ENCODE measurements at regions of chr9 and their contacts with region 1.

Region 1: DNA sequence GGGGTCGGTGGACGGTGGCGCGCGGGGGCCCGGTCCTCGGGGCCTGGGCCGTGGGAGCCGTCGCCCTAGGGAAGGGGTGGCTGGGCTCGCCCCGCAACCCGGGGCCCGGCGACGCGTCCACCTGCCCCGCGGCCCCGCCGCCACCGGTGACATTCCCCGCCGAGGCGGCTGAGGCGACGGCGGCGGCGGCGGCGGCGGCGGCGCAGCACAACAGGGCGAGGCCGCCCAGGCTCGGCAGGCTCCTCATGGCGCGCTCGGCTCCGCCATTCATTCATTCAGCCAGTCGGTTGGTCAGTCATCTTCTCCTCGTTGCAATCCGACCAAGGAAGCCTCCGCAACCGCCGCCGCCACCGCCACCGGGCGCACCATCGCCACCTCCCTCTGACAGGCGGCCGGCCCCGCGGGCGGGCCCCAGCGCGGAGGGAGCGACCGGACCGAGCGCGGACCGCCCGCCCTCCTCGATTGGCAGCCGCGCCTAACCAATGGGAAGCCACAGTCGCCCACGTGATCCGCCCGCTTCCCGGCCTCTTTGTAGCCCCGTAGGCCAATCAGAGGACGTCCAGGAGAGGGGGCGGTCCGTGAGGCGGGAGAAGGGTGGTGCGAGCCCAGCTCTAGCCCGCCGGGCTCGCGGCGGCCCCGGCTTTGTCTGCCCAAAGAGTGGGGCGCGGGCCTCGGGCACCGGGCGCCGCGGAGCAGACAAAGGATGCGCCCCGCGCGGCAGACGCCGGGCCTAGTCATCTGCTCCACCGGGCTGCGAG is at the start of gene MEGF9:
- DNase-seq: peak; percentile 95
- ATAC-seq: peak; percentile 94
- H3K4me3 Mint-ChIP-seq: peak within 1 kb of the TSS; percentile 90
- H3K27ac Mint-ChIP-seq: peak within 1 kb of the TSS; percentile 86
- H3K4me1 Mint-ChIP-seq: peaks cover 38% of the 10 kb centered on the region
- H3K27me3 Mint-ChIP-seq: no peaks in the 10 kb centered on the region
- CTCF ChIP-seq: no peak
- total RNA-seq, gene MEGF9: 8.5 and 9.0 TPM in 2 replicates

Region 2: GRCh38 chr9:119509291-119509905 is 1204.9 kb before region 1 on chr9:
- CTCF ChIA-PET with region 1: no interaction called
- POLR2A ChIA-PET with region 1: no interaction called
- intact Hi-C with region 1: no loop called
- DNase-seq: no peak
- ATAC-seq: no peak
- H3K4me3 Mint-ChIP-seq: no peak overlapping the region
- H3K27ac Mint-ChIP-seq: no peak overlapping the region
- H3K4me1 Mint-ChIP-seq: no peaks in the 10 kb centered on the region
- H3K27me3 Mint-ChIP-seq: no peaks in the 10 kb centered on the region
- CTCF ChIP-seq: no peak

Region 3: DNA sequence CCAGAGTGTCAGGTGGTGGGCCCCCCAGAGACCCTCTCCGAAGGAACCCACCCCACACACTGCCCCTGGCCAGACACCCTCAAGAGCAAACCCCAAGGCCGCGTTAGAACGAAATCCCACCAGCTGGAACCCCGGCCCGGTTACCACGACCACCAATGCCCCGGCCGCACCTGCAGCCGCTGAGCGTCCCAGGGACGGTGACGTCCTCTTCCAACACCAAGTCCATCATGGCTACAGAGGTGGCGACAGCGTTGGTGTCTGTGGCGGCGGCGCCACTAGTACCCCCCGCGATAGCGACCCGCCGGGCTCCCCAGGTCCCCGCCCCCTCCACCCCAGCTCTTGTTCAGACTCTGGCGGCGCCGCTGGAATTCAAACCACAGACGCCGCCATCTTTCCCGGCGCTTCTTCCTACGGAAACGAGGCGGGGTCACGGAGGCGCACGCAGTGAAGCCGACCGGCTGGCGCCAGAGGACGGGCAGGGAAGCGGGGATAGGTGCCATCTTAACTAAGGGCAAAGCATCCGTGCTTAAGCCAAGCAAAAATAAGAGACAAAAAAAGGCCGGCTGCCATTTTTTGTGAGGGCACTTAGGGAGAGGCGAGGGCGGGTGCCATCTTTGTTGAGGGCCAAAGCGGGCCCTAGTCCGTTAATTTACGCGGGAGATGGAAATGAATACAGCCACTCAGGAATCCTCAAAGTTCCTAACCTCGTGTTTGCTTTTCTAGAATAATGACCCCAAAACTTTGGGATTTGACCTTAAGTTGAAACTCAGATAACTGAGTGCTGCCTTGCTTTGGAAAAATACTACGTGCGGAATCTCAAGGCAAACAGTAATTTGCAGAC is 134.3 kb before region 1 on chr9 and contains the start of gene CDK5RAP2:
- CTCF ChIA-PET with region 1: no interaction called
- POLR2A ChIA-PET with region 1: no interaction called
- intact Hi-C with region 1: loop called (anchors 1 kb)
- DNase-seq: peak; percentile 78
- ATAC-seq: peak; percentile 94
- H3K4me3 Mint-ChIP-seq: peak within 1 kb of the TSS; percentile 94
- H3K27ac Mint-ChIP-seq: peak within 1 kb of the TSS; percentile 88
- H3K4me1 Mint-ChIP-seq: peaks cover 47% of the 10 kb centered on the region
- H3K27me3 Mint-ChIP-seq: no peaks in the 10 kb centered on the region
- CTCF ChIP-seq: no peak
- total RNA-seq, gene CDK5RAP2: 63.9 and 80.0 TPM in 2 replicates

Region 4: DNA sequence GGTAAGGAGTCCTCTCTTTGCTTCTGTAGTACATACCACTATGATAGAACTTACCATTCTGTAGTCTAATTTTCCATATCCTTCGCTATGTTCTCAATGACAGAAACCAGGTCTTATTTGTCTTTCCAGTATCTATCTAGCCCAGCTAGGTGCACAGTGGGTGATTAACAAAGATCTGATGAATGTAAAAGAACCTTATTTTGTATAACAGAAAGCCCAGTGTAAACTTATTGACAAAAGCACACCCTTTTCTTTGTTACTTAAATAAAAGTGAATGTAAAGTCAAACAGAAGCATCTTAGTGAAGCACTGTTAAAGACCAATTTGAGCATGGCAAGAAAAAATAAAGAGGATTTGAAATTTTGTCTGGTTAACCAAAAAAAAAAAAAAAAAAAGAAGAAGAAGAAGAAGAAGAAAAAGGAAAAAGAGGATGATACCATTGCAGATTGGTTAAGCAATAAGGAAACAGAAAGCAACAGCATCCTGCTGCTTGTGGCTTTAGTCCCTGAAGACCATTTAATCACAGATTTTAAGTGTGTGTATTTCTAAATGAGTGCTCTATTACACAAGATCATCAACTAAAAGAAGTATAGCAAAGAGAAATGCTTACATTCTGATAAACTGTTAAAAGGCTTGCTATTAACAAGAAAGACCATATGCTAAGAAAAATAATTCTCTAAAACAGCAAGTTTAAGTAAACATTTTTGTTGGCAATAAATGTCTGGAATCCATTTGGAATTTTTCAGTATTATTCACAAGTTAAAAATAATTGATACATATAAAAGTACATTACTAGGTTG is 21.2 kb before region 1 on chr9:
- CTCF ChIA-PET with region 1: no interaction called
- POLR2A ChIA-PET with region 1: interaction called, 4 read pairs
- intact Hi-C with region 1: loop called (anchors 2 kb)
- DNase-seq: no peak
- ATAC-seq: peak; percentile 78
- H3K4me3 Mint-ChIP-seq: peak overlapping the region; percentile 44
- H3K27ac Mint-ChIP-seq: peak overlapping the region; percentile 78
- H3K4me1 Mint-ChIP-seq: peaks cover 32% of the 10 kb centered on the region
- H3K27me3 Mint-ChIP-seq: no peaks in the 10 kb centered on the region
- CTCF ChIP-seq: no peak

Region 5: GRCh38 chr9:120792898-120793765 is 78.9 kb after region 1 on chr9 and contains the start of gene FBXW2:
- CTCF ChIA-PET with region 1: no interaction called
- POLR2A ChIA-PET with region 1: interaction called, 15 read pairs
- intact Hi-C with region 1: loop called (anchors 5 kb)
- DNase-seq: peak; percentile 87
- ATAC-seq: peak; percentile 91
- H3K4me3 Mint-ChIP-seq: peak within 1 kb of the TSS; percentile 91
- H3K27ac Mint-ChIP-seq: peak within 1 kb of the TSS; percentile 89
- H3K4me1 Mint-ChIP-seq: peaks cover 38% of the 10 kb centered on the region
- H3K27me3 Mint-ChIP-seq: no peaks in the 10 kb centered on the region
- CTCF ChIP-seq: no peak
- total RNA-seq, gene FBXW2: 70.4 and 77.9 TPM in 2 replicates

Region 6: GRCh38 chr9:121369595-121370265 is 655.5 kb after region 1 on chr9 and contains the start of gene STOM:
- CTCF ChIA-PET with region 1: no interaction called
- POLR2A ChIA-PET with region 1: no interaction called
- intact Hi-C with region 1: loop called (anchors 1 kb)
- DNase-seq: no peak
- ATAC-seq: peak; percentile 56
- H3K4me3 Mint-ChIP-seq: peak within 1 kb of the TSS; percentile 93
- H3K27ac Mint-ChIP-seq: peak within 1 kb of the TSS; percentile 96
- H3K4me1 Mint-ChIP-seq: peaks cover 28% of the 10 kb centered on the region
- H3K27me3 Mint-ChIP-seq: no peaks in the 10 kb centered on the region
- CTCF ChIP-seq: no peak
- total RNA-seq, gene STOM: 9.8 and 11.3 TPM in 2 replicates

Region 7: DNA sequence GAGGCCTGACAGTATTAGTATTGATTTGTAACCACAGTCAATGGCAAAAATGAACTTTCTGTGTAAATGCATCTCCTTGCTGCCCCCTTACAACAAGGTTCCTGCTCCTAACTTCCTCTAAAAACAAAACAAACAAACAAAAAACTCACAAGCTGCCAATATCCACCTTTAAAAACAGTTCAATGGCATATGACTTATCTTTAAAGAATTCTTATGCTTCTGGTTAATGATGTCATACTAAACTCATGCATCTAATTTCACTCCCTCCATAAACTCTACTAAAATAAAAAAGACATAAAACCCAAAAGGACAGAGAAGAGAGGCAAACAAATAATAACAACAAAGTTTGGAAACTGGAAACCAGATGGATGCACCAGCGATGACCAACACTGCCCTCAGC is 1821.9 kb after region 1 on chr9:
- CTCF ChIA-PET with region 1: no interaction called
- POLR2A ChIA-PET with region 1: no interaction called
- intact Hi-C with region 1: no loop called
- DNase-seq: no peak
- ATAC-seq: no peak
- H3K4me3 Mint-ChIP-seq: no peak overlapping the region
- H3K27ac Mint-ChIP-seq: no peak overlapping the region
- H3K4me1 Mint-ChIP-seq: no peaks in the 10 kb centered on the region
- H3K27me3 Mint-ChIP-seq: peaks cover 9% of the 10 kb centered on the region
- CTCF ChIP-seq: no peak

Measured in activated B cell treated with CpG ODN at 0.5 μM for 24 hours (primary cell).